SK-N-SH (cell line): ENCODE measurements at regions of chr16 and their contacts with region 1.

Region 1: DNA sequence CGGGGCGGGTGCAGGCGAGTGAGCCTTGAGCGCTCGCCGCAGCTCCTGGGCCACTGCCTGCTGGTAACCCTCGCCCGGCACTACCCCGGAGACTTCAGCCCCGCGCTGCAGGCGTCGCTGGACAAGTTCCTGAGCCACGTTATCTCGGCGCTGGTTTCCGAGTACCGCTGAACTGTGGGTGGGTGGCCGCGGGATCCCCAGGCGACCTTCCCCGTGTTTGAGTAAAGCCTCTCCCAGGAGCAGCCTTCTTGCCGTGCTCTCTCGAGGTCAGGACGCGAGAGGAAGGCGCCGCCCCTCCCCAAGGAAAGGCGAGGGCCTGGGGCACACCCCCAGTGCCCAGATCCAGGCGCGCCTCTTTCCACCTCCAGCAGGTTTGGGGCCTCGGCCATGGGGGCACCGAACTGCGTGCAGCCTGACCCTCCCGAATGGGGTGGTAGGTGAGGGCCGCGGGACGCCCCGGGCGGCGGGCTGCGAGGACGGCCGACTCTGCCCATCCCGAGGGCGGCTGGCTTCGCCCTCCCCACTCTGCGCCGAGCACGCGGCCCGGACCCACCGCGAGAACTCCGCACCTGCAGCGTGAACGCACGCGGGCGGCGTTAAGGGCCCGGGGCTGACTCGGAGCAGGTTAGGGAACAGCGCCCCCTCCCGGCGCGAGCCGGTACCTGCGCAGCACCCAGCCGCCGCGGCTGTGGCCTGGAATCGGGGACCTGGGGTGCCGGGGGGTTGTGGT is 844 bp downstream of the HBQ1 start:
- DNase-seq: peak; percentile 95
- H3K4me3 ChIP-seq: peak overlapping the region; percentile 42 to 56
- H3K27ac ChIP-seq: no peak overlapping the region
- H3K4me1 ChIP-seq: peaks cover 0 to 10% of the 10 kb centered on the region in 2 experiments; a peak in 1 of 4 replicates
- H3K27me3 ChIP-seq: peaks cover 14% of the 10 kb centered on the region
- CTCF ChIP-seq: peak; percentile 86
- EP300 ChIP-seq: no peak
- RAD21 ChIP-seq: peak; percentile 67

Region 2: DNA sequence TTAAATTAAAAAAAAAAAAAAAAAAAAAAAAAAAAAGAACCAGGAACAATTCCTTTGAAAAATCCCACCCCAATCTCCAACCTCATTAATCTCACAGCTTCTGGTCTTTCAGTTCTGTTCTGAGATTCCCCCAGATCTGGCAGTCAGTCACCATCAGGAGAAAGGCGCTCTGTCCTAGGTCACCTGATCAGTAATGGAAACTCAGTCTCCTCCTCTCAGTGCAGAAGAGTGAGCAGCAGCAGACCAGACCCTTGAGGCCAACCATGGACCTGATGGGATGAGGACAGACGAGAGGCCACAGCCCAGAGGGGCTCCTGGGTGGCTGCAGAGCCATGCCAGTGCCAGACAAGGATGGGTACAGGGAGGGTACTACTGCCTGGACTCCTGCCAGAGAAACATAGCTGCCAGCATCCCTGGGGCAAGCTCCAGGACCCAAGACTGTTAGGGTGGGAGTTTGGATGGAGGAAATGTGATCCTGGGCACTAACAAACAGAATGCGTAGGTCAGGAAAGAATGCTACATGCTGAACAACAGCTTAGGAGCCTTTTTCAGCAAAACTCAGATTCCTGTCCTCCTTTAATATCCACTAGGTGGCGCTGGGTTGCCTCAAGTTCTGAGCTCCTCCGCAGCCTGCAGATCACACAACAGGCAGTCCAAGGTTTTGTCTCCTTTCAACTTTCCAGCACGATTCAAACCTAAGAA is 74.3 kb before region 1 on chr16:
- CTCF ChIA-PET with region 1: interaction called, 120 read pairs
- POLR2A ChIA-PET with region 1: interaction called, 3 read pairs
- DNase-seq: peak; percentile 79
- H3K4me3 ChIP-seq: no peak overlapping the region; a peak in 1 of 4 replicates
- H3K27ac ChIP-seq: no peak overlapping the region
- H3K4me1 ChIP-seq: no peaks in the 10 kb centered on the region; a peak in 1 of 4 replicates
- H3K27me3 ChIP-seq: no peaks in the 10 kb centered on the region
- CTCF ChIP-seq: peak; percentile 84
- EP300 ChIP-seq: no peak
- RAD21 ChIP-seq: peak; percentile 83

Region 3: DNA sequence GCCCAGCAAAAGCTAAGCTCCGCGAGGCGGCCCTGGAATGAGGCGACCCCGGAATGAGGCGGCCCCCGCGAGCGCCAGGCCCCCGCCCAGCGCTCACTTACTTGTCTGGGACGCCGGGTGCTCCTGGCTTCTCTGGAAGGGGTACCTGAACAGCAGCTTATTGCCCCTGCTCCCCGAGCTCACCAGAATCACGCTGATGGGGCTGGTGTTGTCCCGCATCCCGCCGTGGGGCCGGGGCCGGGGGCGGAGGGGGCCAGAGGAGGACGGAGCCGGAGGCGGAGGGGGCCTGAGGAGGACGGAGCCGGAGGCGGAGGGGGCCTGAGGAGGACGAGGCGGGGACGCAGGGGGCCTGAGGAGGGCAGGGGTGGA is 43.1 kb before region 1 on chr16:
- CTCF ChIA-PET with region 1: interaction called, 15 read pairs
- POLR2A ChIA-PET with region 1: no interaction called
- DNase-seq: peak; percentile 76
- H3K4me3 ChIP-seq: peak overlapping the region; percentile 65 to 95
- H3K27ac ChIP-seq: peak overlapping the region; percentile 30 to 68; a peak in 3 of 4 replicates
- H3K4me1 ChIP-seq: peaks cover 4% of the 10 kb centered on the region in 2 experiments; a peak in 1 of 4 replicates
- H3K27me3 ChIP-seq: no peaks in the 10 kb centered on the region
- CTCF ChIP-seq: no peak
- EP300 ChIP-seq: no peak
- RAD21 ChIP-seq: no peak

Region 4: GRCh38 chr16:170788-171187 is 10.3 kb before region 1 on chr16:
- CTCF ChIA-PET with region 1: interaction called, 28 read pairs
- POLR2A ChIA-PET with region 1: interaction called, 3 read pairs
- DNase-seq: no peak
- H3K4me3 ChIP-seq: no peak overlapping the region
- H3K27ac ChIP-seq: no peak overlapping the region
- H3K4me1 ChIP-seq: peaks cover 0 to 5% of the 10 kb centered on the region in 2 experiments; a peak in 1 of 4 replicates
- H3K27me3 ChIP-seq: peaks cover 33% of the 10 kb centered on the region
- CTCF ChIP-seq: no peak
- EP300 ChIP-seq: no peak
- RAD21 ChIP-seq: no peak

Region 5: DNA sequence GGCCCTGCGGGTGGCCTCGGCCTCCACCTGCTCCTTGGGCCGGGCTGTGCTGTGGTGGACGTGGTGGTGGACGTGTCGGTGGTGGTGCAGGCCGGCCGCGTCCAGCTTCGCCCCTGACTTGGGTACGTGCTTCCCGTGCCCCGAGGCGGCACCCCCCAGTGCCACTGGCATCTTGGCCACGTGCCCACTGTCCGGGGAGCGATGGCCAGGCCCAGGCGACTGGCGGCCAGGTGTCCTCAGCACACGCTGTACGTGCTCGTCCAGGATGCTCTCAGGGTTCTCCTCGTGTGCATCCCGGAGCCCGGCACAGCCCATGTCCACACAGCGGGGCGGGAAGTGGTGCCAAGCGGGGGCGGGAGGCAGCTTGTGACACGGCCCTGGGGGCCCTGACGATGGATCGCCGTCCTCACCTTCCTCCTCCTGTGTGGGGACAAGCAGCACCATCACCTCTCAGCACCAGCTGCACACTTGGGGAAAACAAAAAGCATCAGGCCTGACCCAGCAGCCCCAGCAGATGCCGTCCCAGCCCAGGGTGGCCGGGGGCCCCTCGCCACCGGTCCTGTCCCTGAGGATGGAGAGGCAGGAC is 116.8 kb after region 1 on chr16:
- CTCF ChIA-PET with region 1: no interaction called
- POLR2A ChIA-PET with region 1: no interaction called
- DNase-seq: no peak
- H3K4me3 ChIP-seq: no peak overlapping the region
- H3K27ac ChIP-seq: no peak overlapping the region
- H3K4me1 ChIP-seq: no peaks in the 10 kb centered on the region
- H3K27me3 ChIP-seq: no peaks in the 10 kb centered on the region
- CTCF ChIP-seq: no peak
- EP300 ChIP-seq: no peak
- RAD21 ChIP-seq: no peak

Region 6: DNA sequence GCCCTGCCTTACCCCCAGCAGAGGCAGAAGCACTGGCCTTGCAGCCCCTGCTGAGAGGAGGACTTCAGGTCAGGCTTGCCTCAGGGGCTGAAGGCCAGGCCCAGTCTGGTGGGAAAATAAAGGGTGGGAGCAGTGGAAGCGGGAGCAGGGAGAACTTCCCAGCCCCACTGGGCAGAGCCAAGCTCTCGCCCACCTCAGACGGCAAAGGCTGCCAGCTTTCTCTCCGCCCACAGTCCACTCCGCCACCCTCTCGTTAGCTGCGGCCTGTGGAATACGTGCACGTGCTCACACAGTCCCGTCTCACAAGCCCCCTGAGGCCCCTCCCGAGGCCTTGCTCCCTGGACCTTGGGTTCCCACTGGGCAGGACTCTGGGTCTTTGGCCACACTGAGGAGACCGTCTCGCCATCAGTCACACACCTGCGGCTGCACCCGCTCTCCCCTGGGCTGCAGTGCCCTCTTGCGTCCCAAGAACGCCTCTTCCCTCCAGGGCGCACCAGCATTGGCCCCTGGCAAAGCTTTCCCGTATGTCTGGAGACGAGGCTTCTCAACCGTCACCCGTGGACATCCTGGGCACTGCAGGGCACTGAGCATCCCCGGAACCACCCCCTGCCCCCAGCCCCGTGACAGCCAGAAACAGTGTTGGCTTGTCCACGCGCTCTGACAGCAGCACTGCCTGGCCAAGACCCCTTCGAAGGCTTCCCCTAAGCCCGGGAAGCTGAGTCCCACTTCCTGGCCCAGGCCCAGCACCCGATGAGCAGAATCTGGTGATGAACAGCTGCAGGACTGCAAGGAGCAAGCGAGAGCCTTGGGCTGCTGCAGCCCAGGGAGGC is 181.0 kb after region 1 on chr16:
- CTCF ChIA-PET with region 1: interaction called, 38 read pairs
- POLR2A ChIA-PET with region 1: no interaction called
- DNase-seq: peak; percentile 90
- H3K4me3 ChIP-seq: no peak overlapping the region
- H3K27ac ChIP-seq: no peak overlapping the region
- H3K4me1 ChIP-seq: peaks cover 0 to 18% of the 10 kb centered on the region in 2 experiments; a peak in 1 of 4 replicates
- H3K27me3 ChIP-seq: no peaks in the 10 kb centered on the region
- CTCF ChIP-seq: peak; percentile 69
- EP300 ChIP-seq: no peak
- RAD21 ChIP-seq: peak; percentile 93